ENCODE measurements at regions of chr2 and their contacts with region 1.

Region 1: DNA sequence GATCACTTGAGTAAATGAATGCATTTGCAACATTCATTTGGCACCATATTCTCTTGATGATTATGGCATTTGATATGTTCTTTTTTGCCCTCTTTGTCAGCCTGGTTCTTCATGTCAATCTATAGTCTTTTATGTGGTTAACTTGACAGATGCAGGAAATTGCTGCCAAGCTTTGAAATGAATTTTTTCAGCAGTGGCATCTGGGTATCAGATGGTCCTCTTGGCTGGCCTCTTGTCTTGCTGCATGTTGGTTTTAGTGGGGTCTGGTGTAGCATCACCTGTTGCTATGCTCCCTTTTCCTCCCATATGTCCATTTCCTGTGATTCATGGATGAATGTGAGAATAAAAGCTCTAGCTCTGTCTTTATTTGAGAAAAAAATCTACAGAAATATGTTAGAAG is 119.9 kb downstream of the DPP4 start:
- DNase-seq: no peak
- H3K4me3 Mint-ChIP-seq: no peak overlapping the region
- H3K27ac Mint-ChIP-seq: peak overlapping the region; percentile 83
- H3K4me1 Mint-ChIP-seq: peaks cover 56% of the 10 kb centered on the region
- H3K27me3 Mint-ChIP-seq: no peaks in the 10 kb centered on the region

Region 2: DNA sequence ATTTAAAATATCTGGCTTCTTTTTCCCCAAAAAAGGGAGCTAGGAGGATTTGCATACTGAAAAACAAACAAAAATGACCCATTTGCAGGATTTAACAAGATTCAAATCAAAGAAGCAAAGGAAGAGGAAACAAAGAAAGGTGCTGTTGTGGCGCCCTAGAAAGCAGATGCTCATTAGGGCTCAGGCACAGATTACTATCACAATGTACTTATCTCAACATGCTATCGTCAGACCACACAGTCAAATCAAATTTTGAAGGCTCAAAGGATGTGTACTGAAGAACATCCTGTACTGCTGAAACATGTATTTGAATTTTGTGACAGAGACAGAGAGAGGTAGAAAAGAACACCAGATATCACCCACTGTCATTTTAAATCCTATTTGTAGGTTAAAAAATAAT is 1471.4 kb before region 1 on chr2:
- CTCF ChIA-PET with region 1: no interaction called
- POLR2A ChIA-PET with region 1: no interaction called
- intact Hi-C with region 1: loop called (anchors 10 kb)
- DNase-seq: no peak
- H3K4me3 Mint-ChIP-seq: peak overlapping the region; percentile 46
- H3K27ac Mint-ChIP-seq: peak overlapping the region; percentile 70
- H3K4me1 Mint-ChIP-seq: peaks cover 62% of the 10 kb centered on the region
- H3K27me3 Mint-ChIP-seq: no peaks in the 10 kb centered on the region

Region 3: DNA sequence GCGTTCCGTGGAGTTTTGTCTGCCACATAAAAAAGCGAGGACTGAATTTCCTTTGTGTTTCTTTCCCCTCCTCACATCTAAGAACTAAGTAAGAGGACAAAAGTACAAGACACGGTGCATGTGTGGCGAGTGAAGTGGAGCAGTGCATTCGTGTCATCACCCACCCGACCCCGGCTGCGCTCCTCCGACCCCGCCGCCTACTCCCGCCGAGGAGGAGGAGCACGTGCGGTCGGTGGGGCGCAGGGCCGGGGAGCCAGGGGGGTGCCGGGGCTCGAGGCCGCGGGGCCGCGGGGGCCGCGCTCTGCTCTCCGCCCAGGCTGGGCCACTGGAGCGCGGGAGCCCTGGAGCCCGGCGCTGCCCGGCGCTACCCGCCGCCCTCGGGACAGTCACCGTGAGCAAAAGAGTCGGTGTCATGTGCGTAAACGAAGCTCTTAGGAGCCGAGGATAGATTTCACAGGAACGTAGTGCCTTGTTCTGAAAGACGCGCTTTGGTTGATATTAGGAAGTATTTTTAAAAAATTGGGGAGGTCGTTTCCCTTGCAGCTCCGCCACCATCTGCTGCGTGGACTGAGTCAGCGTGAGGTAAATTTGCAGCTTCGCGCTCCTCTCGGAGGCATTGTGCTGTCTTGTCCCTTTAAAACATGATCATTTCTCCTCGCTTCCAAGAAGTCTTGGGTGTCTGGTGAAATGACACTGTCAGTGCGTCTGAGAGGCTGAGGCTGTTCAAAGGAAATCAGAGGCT is 527.0 kb before region 1 on chr2:
- CTCF ChIA-PET with region 1: no interaction called
- POLR2A ChIA-PET with region 1: no interaction called
- intact Hi-C with region 1: loop called (anchors 5 kb)
- DNase-seq: no peak
- H3K4me3 Mint-ChIP-seq: peak overlapping the region; percentile 48
- H3K27ac Mint-ChIP-seq: no peak overlapping the region
- H3K4me1 Mint-ChIP-seq: peaks cover 28% of the 10 kb centered on the region
- H3K27me3 Mint-ChIP-seq: peaks cover 62% of the 10 kb centered on the region

Region 4: GRCh38 chr2:161905389-161906046 is 48.6 kb before region 1 on chr2:
- CTCF ChIA-PET with region 1: no interaction called
- POLR2A ChIA-PET with region 1: no interaction called
- intact Hi-C with region 1: loop called (anchors 1 kb)
- DNase-seq: peak; percentile 43
- H3K4me3 Mint-ChIP-seq: no peak overlapping the region
- H3K27ac Mint-ChIP-seq: peak overlapping the region; percentile 66
- H3K4me1 Mint-ChIP-seq: peaks cover 10% of the 10 kb centered on the region
- H3K27me3 Mint-ChIP-seq: no peaks in the 10 kb centered on the region

Region 5: GRCh38 chr2:162013514-162014475 is 59.7 kb after region 1 on chr2:
- CTCF ChIA-PET with region 1: no interaction called
- POLR2A ChIA-PET with region 1: interaction called, 8 read pairs
- intact Hi-C with region 1: loop called (anchors 1 kb)
- DNase-seq: no peak
- H3K4me3 Mint-ChIP-seq: peak overlapping the region; percentile 56
- H3K27ac Mint-ChIP-seq: peak overlapping the region; percentile 89
- H3K4me1 Mint-ChIP-seq: peaks cover 61% of the 10 kb centered on the region
- H3K27me3 Mint-ChIP-seq: no peaks in the 10 kb centered on the region

Region 6: DNA sequence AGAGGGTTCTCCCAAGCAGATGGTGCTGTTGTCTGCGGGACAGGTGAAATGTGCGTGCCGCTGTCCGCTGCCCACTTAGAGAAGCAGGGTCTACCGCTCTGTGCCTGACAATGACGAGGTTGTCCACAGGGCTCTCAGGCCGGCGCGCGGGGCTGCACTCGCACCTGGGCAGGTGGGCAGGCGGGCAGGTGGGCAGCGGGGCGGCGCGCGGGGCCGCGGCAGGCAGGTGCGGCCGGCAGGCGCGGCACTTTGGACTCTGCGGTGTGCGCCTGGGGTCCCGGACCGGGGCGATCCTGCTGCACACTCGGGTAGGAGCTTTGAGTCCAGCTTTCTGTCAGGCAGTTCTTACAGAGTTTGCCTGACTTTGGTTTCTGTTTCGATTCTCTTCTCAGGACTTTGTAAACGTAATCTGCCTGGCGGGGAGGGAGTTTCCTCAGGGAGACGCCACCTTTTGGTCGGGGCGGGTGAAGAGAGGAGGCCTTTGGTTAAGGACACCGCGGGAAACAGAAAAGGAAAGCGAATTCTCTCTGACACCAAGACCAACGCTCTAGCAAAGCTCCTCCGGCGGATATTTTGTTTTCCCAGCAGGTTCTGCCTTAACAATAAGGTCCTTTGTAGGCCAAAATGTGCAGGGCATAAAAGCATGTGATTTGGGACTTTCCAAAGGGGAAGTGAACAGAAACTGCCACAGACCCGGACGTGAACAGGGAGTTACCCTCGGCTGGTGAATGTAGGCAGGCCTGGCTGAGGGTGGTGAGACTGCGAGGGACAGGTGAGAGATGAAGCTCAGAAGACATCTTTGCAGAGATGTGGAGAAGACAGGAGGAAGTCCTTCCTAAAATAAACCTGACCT is 364.5 kb after region 1 on chr2 and contains the start of gene IFIH1:
- CTCF ChIA-PET with region 1: no interaction called
- POLR2A ChIA-PET with region 1: no interaction called
- intact Hi-C with region 1: loop called (anchors 2 kb)
- DNase-seq: peak; percentile 87
- H3K4me3 Mint-ChIP-seq: peak within 1 kb of the TSS; percentile 85
- H3K27ac Mint-ChIP-seq: peak within 1 kb of the TSS; percentile 95
- H3K4me1 Mint-ChIP-seq: peaks cover 55% of the 10 kb centered on the region
- H3K27me3 Mint-ChIP-seq: no peaks in the 10 kb centered on the region
- total RNA-seq, gene IFIH1: 33.3 to 34.2 TPM

Measured in activated CD4-positive, alpha-beta memory T cell treated with anti-CD3 and anti-CD28 coated beads for 36 hours (primary cell).